ENCODE measurements at regions of chr11 and their contacts with region 1.

Region 1: DNA sequence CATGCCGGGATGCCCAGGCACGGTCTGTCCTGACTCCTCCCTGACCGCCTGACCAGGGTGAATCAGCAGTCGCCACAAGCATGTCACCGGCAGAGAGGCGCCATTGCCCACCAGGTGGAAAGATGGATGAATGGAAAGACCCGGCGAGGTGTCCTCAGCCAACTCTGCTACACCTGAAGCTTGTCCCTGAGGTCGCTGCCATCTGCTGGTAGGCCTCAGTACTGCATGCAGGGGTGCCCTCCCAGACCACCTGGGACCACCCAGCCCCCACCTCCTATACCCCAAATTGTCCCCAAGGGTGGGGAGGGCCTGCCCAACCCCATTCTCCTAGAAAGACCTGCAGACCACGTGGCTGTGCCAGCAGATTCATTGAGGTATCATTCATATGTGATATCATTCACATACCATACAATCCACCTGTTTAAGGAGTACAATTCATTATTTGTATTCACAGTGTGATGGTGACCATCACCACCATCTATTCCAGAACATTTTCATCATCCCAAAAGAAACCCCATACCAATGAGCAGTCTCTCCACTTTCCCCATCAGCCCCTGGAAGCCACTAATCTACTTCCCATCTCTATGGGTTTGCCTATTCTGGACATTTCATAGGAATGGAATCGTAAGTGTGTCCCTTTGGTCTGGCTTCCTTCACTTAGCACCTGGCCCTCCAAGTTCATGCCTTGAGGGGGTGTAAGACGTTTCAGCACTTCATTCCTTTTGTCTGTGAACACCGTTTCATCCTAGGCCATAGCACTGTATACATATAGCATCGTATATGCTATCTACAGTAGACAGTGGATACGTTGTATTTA is 17.5 kb downstream of the FGF3 start:
- DNase-seq: no peak
- ATAC-seq: no peak
- H3K4me3 ChIP-seq: no peak overlapping the region
- H3K27ac ChIP-seq: no peak overlapping the region
- H3K4me1 ChIP-seq: peaks cover 0 to 7% (median 0%) of the 10 kb centered on the region in 9 donors
- H3K27me3 ChIP-seq: peaks cover 0 to 13% (median 0%) of the 10 kb centered on the region in 7 donors
- CTCF ChIP-seq: peak; percentile 33 to 66 (median 62)

Region 2: GRCh38 chr11:68714060-68714856 is 1087.5 kb before region 1 on chr11:
- intact Hi-C with region 1: loop called in 1 of 10 experiments (anchors 10 kb)
- DNase-seq: no peak
- ATAC-seq: no peak
- H3K4me3 ChIP-seq: no peak overlapping the region
- H3K27ac ChIP-seq: peak overlapping the region in 1 of 10 donors; percentile 34
- H3K4me1 ChIP-seq: peaks cover 0 to 14% (median 0%) of the 10 kb centered on the region in 9 donors
- H3K27me3 ChIP-seq: peaks cover 0 to 30% (median 6%) of the 10 kb centered on the region in 7 donors
- CTCF ChIP-seq: no peak

Region 3: GRCh38 chr11:69718147-69718546 is 83.6 kb before region 1 on chr11:
- intact Hi-C with region 1: loop called in 2 of 10 experiments (anchors 10 kb)
- DNase-seq: peak; percentile 51 to 52
- ATAC-seq: peak in 6 of 8 donors; percentile 62 to 79 (median 72)
- H3K4me3 ChIP-seq: no peak overlapping the region
- H3K27ac ChIP-seq: no peak overlapping the region
- H3K4me1 ChIP-seq: peaks cover 0 to 5% (median 0%) of the 10 kb centered on the region in 9 donors
- H3K27me3 ChIP-seq: peaks cover 5 to 81% (median 63%) of the 10 kb centered on the region in 7 donors
- CTCF ChIP-seq: peak; percentile 27 to 61 (median 55)

Region 4: GRCh38 chr11:69867738-69868493 is 66.2 kb after region 1 on chr11:
- intact Hi-C with region 1: loop called in 1 of 10 experiments (anchors 5 kb)
- DNase-seq: no peak
- ATAC-seq: no peak
- H3K4me3 ChIP-seq: no peak overlapping the region
- H3K27ac ChIP-seq: no peak overlapping the region
- H3K4me1 ChIP-seq: no peaks in the 10 kb centered on the region
- H3K27me3 ChIP-seq: peaks cover 0 to 53% (median 47%) of the 10 kb centered on the region in 7 donors
- CTCF ChIP-seq: no peak

Measured in heart right ventricle (tissue), 16 donors.